Naive thymus-derived CD8-positive, alpha-beta T cell (primary cell): ENCODE measurements at regions of chr14 and their contacts with region 1.

Region 1: GRCh38 chr14:73886449-73887317 is at the start of gene ZNF410:
- DNase-seq: peak; percentile 75 to 91 (median 84)
- ATAC-seq: peak; percentile 97
- H3K4me3 Mint-ChIP-seq: peak within 1 kb of the TSS; percentile 94 to 99 (median 98)
- H3K27ac Mint-ChIP-seq: peak within 1 kb of the TSS; percentile 98 to 100 (median 99)
- H3K4me1 Mint-ChIP-seq: peaks cover 22 to 56% (median 52%) of the 10 kb centered on the region in 4 donors
- H3K27me3 Mint-ChIP-seq: no peaks in the 10 kb centered on the region
- polyA plus RNA-seq, gene ZNF410: 50.6 to 64.8 (median 50.8) TPM

Region 2: GRCh38 chr14:73833530-73834257 is 53.0 kb before region 1 on chr14:
- POLR2A ChIA-PET with region 1: no interaction called
- DNase-seq: no peak
- ATAC-seq: no peak
- H3K4me3 Mint-ChIP-seq: no peak overlapping the region
- H3K27ac Mint-ChIP-seq: no peak overlapping the region
- H3K4me1 Mint-ChIP-seq: peaks cover 0 to 6% (median under 1%) of the 10 kb centered on the region in 4 donors
- H3K27me3 Mint-ChIP-seq: no peaks in the 10 kb centered on the region

Region 3: DNA sequence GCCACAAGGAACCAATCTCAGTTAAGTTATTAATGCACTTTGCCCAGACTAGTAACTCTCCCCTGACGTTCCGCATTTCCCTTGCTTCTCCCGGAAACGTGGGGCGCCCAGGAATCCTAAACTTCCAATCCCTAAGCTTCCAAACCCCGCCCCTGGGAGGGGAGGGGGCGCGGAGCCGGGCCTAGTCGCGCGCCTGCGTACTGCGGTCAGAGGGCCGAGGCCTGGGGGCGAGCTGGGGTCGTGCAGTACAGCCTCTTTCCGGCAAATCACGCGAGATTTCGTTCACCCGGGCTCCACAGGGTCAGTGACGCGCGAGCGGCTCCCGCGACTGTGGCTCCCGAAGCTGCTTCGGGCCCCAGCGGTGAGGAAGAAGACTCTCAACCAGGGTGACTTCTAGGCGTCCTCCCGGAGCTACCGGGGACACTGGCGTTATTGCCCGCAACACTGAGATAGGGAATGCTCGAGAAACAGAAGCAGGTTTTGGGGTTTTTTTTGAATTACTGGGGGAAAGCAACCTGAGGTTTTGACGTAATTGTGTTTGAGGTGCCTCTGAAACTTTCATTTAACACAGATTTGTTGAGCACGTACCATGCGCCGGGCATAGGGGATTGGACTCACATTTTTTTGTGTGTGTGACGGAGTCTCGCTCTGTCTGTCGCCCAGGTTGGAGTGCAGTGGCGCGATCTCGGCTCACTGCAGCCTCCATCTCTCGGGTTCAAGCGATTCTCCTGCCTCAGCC is 34.9 kb before region 1 on chr14 and contains the start of gene PTGR2:
- POLR2A ChIA-PET with region 1: interaction called, 14 read pairs
- DNase-seq: peak; percentile 85 to 97 (median 92)
- ATAC-seq: peak; percentile 92 to 96
- H3K4me3 Mint-ChIP-seq: peak within 1 kb of the TSS; percentile 89 to 98 (median 98)
- H3K27ac Mint-ChIP-seq: peak within 1 kb of the TSS; percentile 92 to 100 (median 99)
- H3K4me1 Mint-ChIP-seq: peaks cover 18 to 26% (median 19%) of the 10 kb centered on the region in 4 donors
- H3K27me3 Mint-ChIP-seq: no peaks in the 10 kb centered on the region
- polyA plus RNA-seq, gene PTGR2: 4.4 to 5.9 (median 5.1) TPM

Region 4: GRCh38 chr14:73991092-73991491 is 104.4 kb after region 1 on chr14:
- POLR2A ChIA-PET with region 1: no interaction called
- DNase-seq: no peak
- ATAC-seq: no peak
- H3K4me3 Mint-ChIP-seq: no peak overlapping the region
- H3K27ac Mint-ChIP-seq: no peak overlapping the region
- H3K4me1 Mint-ChIP-seq: peaks cover 0 to under 1% (median 0%) of the 10 kb centered on the region in 4 donors
- H3K27me3 Mint-ChIP-seq: no peaks in the 10 kb centered on the region